ENCODE measurements at regions of chr3 and their contacts with region 1.

Region 1: DNA sequence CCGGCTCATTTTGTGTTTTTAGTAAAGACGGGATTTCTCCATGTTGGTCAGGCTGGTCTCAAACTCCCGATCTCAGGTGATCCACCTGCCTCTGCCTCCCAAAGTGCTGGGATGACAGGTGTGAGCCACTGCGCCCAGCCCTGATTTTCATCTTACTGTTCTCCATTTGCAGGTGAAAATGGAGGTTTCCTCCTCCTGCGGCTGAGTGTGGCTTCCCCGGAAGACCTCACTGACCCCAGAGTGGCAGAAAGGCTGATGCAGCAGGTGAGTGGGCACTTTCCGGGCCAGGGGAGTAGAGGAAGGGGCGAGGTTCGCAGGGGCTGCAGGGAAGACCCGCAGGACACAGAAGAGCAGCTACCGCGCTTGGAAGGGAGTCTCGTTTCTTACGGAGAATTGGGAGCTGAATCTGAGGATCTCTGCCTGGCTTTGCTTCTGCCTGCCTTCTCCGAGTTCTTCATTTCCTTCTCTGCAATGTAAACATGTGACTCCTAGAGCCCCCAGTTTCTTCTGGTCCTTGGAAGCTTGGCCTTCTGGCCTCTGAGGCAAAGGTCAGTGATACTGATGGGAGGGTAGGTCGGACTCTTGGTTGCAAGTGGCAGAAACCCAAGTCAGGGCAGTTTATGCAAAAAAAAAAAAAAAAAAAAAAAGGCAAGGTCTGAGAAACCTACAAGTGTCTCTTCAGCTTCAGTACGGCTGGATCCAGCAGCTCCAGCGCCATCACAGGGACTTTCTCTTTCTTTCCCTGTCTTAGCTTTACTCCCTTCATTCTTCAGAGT is 8.9 kb downstream of the MUC20 start:
- DNase-seq: no peak
- H3K4me3 Mint-ChIP-seq: no peak overlapping the region
- H3K27ac Mint-ChIP-seq: no peak overlapping the region
- H3K4me1 Mint-ChIP-seq: no peaks in the 10 kb centered on the region
- H3K27me3 Mint-ChIP-seq: no peaks in the 10 kb centered on the region

Region 2: DNA sequence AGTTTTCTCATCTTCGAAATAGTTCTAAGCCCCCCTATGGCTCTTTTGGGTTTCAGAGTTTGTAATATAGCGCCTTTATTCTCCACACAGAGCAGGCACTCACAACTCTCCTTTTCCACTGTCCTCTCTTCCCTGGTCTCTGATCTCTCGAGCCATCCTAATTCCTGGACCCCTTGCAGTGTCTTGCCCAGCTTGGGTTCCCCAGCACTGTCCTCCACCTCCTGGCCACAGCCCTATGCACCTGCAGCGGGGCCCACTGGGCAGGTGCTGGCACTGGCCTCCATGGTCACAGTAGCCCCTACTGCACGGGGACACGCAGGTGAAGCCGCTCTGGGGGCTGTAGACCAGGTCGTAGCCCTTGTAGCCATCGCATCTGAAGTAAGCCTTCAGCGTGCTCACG is 19.0 kb after region 1 on chr3:
- intact Hi-C with region 1: loop called (anchors 1 kb)
- DNase-seq: no peak
- H3K4me3 Mint-ChIP-seq: peak overlapping the region; percentile 1
- H3K27ac Mint-ChIP-seq: peak overlapping the region; percentile 36
- H3K4me1 Mint-ChIP-seq: peaks cover 14% of the 10 kb centered on the region
- H3K27me3 Mint-ChIP-seq: peaks cover 2% of the 10 kb centered on the region

Measured in activated T-helper 1 cell treated with anti-CD3 and anti-CD28 coated beads, Interleukin-12 subunit alpha, Interleukin-12 subunit beta, Interleukin-2, Interleukin-4 antibody, amounts not matched to agents 30 ng/mL and 10 ng/mL and 1 ng/mL, durations not matched to agents 14 hours and 24 hours and 36 hours (primary cell).